MCF 10A (cell line): ENCODE measurements at regions of chr4 and their contacts with region 1.

Region 1: GRCh38 chr4:181143250-181143854 is 1099.8 kb upstream of the TENM3 start:
- DNase-seq: peak; percentile 83
- H3K4me3 Mint-ChIP-seq: no peak overlapping the region
- H3K27ac Mint-ChIP-seq: no peak overlapping the region
- H3K4me1 Mint-ChIP-seq: no peaks in the 10 kb centered on the region
- H3K27me3 Mint-ChIP-seq: no peaks in the 10 kb centered on the region
- CTCF ChIP-seq: peak; percentile 88

Region 2: DNA sequence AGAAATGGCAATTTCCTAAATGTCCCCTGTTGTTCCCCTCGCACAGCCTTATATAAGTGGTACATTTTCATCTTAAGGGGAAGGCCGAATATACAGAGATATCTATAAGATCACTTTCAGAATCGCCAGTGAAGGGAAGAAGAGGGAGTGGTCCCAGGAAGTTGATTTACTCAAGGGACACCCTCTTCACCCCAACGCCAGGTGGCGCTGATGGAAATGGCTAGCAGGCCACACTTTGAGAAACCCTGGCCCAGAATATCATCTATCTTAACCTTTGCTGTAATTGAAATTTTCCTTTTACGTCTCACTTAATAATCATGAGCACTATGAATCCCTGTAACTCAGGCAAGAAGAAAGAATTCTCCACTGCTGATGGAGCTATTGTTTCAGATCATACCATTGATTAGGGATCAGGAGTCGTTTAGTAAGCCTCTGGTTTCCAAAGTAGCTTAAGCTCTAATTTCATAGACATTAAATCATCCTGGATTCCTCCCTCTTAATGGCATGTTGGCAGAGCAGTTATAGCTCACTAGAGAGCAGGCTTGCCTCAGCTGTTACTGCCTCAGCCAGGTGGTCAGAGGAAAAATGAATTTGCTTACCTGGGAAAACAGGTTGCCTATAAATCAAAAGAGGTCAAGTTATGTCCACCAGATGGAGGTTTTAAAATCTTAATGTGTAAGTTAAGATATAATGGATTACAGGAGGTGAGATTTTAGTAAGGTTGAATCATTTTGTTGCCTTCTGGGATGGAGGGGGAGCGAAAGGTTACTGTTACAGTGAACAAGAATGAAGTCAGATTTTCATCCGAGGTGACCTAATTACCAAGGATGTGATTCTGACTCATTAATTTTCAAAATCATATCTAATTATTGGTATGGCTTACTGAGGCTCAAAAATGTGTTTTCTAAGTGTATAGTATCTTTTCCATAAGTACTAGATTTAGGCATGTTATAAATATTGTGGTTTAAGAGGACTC is 158.7 kb after region 1 on chr4:
- CTCF ChIA-PET with region 1: interaction called, 5 read pairs
- POLR2A ChIA-PET with region 1: no interaction called
- intact Hi-C with region 1: loop called (anchors 2 kb)
- DNase-seq: peak; percentile 81
- H3K4me3 Mint-ChIP-seq: no peak overlapping the region
- H3K27ac Mint-ChIP-seq: no peak overlapping the region
- H3K4me1 Mint-ChIP-seq: peaks cover 5% of the 10 kb centered on the region
- H3K27me3 Mint-ChIP-seq: no peaks in the 10 kb centered on the region
- CTCF ChIP-seq: peak; percentile 69

Region 3: DNA sequence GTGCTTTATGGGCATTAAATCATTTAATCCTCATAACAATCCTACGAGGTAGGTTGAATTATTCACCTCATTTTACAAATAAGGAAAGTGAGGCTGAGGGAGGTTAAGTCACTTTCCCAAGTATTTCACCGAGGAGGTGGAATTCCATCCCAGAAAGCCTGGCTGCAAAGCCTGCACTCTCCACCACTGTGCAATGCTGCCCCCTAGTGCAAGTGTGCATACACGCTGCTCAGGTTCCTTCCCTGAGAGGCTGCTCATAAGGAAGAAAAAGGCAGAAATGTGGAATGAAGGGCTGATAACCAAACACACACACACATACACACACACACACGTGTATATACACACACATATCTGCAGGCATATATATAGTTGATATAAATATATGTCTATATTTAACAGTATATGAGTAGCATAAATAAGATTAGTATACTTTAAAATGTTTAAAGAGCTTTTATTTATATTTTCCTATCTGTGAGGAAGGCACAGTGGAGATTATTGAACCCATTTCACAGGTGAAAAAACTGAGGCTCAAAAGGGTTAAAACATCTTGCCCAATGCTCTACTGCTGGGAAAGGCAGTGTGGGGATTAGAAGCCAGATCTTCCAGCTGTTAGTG is 385.3 kb after region 1 on chr4:
- CTCF ChIA-PET with region 1: interaction called, 121 read pairs
- POLR2A ChIA-PET with region 1: interaction called, 3 read pairs
- intact Hi-C with region 1: loop called (anchors 1 kb)
- DNase-seq: peak; percentile 89
- H3K4me3 Mint-ChIP-seq: no peak overlapping the region
- H3K27ac Mint-ChIP-seq: no peak overlapping the region
- H3K4me1 Mint-ChIP-seq: no peaks in the 10 kb centered on the region
- H3K27me3 Mint-ChIP-seq: no peaks in the 10 kb centered on the region
- CTCF ChIP-seq: peak; percentile 92

Region 4: DNA sequence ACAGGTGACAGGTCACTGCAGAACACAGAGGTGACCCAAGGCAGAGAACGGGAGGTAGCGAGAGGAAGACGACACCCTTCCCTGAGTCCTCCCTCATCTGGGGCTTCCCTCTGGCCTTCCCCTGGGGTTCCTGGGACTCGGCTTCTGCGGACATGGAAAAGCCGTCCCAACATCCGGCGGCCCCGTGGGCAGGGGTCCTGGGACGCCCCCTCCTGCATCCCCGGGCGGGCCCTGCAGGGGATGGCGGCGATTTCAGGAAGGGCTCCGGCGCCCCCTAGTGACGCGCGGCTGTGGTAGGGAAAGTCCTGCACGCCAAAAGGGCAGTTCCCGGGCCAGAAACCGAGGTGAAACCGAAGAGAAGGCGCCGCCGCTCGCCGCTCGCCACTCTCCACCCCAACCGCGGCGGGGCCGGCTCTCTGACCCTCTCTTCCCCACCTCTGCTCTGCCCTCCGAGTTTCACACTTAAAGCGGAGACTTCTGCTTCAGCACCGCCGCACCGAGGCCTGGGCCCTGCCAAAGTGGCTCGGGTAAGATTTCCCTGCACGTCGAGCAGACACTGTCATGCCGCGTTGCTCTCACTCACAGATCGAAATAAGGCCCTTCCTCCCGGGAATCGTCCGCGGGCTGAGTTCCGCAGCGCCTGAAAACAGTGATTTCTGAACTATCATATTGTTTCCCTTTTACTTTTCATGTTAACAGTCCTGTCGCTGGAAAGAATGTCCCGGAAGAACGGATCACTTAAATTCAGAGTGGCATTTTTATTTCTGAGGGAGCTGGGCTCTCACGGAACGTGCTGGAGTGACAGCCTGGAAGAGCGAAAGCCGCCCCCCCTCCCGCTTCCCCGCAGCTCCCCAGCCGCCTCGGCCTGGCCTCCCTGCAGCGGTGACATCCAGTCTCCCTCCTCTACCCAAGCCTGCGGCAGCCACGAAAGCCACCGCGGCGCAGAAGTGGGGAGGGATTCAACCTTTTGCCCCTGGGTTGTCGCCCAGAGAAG is 1663.2 kb after region 1 on chr4:
- CTCF ChIA-PET with region 1: no interaction called
- POLR2A ChIA-PET with region 1: no interaction called
- intact Hi-C with region 1: loop called (anchors 1 kb)
- DNase-seq: peak; percentile 62
- H3K4me3 Mint-ChIP-seq: no peak overlapping the region
- H3K27ac Mint-ChIP-seq: no peak overlapping the region
- H3K4me1 Mint-ChIP-seq: no peaks in the 10 kb centered on the region
- H3K27me3 Mint-ChIP-seq: no peaks in the 10 kb centered on the region
- CTCF ChIP-seq: peak; percentile 88